Right cardiac atrium (tissue), 5 donors: ENCODE measurements at regions of chr1 and their contacts with region 1.

Region 1: DNA sequence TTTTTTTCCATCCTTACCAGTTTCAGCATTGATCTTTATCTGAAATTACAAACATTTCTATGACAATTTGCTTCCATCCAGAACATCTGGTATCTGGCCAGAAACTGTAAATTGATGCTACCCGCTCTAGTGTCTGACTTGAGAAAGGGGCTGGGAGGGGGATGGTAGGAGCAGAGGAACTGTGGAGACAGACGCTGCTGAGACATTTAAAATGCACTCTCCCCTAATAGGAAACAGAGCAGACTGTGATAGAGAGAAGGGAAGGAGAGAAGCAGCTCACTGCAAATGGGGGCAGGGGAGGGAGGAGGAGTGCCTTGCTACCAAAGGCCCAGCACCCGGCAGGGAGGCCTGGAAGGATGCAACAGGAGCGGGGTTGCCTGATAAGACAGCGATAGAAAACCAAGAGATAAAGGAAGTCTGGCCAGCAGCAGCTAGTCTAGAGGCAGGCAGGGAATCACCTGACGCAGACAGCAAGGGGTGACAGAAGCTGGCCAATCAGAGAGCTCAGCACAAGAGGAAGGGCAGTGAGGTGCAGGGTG is 195.5 kb upstream of the NFIA start:
- DNase-seq: no peak
- ATAC-seq: peak in 1 of 2 donors; percentile 31
- H3K4me3 ChIP-seq: no peak overlapping the region
- H3K27ac ChIP-seq: no peak overlapping the region
- H3K4me1 ChIP-seq: peaks cover 2% of the 10 kb centered on the region
- H3K27me3 ChIP-seq: no peaks in the 10 kb centered on the region

Region 2: DNA sequence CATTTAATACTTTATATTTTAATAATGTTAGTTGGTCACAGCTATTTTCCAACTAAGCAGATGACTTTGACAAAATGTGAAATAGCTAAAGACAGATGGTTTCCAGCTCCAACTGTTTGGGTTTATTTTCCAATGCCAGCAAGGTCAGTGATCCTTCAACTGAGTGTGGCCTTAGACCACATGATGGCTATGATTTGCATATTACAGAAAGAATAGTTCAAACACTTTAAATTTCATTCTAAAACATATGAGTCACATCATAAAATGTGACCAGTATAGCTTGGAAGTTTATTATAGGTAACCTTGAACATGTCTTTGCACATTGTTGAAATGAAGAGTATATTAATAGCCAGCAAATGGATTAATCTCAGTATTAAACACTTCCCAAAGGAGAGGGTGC is 359.3 kb before region 1 on chr1:
- intact Hi-C with region 1: no loop called
- DNase-seq: no peak
- ATAC-seq: no peak
- H3K4me3 ChIP-seq: no peak overlapping the region
- H3K27ac ChIP-seq: no peak overlapping the region
- H3K4me1 ChIP-seq: no peaks in the 10 kb centered on the region
- H3K27me3 ChIP-seq: no peaks in the 10 kb centered on the region

Region 3: GRCh38 chr1:60825593-60825992 is 61.3 kb before region 1 on chr1:
- intact Hi-C with region 1: loop called in 1 of 4 experiments (anchors 10 kb)
- DNase-seq: peak in 1 of 3 donors; percentile 55
- ATAC-seq: peak in 1 of 2 donors; percentile 43
- H3K4me3 ChIP-seq: no peak overlapping the region
- H3K27ac ChIP-seq: no peak overlapping the region
- H3K4me1 ChIP-seq: no peaks in the 10 kb centered on the region
- H3K27me3 ChIP-seq: no peaks in the 10 kb centered on the region